Panc1 (cell line): ENCODE measurements at regions of chr17 and their contacts with region 1.

Region 1: GRCh38 chr17:60893475-60893874 is 215.8 kb downstream of the BCAS3 start:
- DNase-seq: no peak
- ATAC-seq: no peak
- H3K4me3 ChIP-seq: no peak overlapping the region
- H3K27ac ChIP-seq: no peak overlapping the region
- H3K4me1 ChIP-seq: no peaks in the 10 kb centered on the region
- H3K27me3 ChIP-seq: no peaks in the 10 kb centered on the region
- CTCF ChIP-seq: no peak

Region 2: DNA sequence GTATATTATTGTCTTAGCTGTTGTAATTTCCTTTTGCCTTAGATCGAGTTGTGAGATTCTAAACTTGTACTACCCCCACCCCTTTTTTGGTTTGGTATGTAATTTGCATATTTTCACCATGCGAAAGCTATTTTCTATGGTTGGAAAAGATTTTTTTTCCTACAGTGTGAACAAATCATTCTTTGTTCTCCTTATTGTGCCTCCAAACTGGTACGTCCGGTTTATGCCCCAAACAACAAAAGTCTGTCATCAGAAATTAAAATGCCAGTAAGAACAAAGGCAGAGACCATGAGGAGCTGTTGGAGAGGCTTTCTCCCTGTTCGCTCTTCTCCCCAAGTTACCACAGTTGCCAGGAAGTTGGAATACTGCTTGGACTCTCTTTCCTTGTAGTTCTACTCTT is 149.7 kb before region 1 on chr17:
- CTCF ChIA-PET with region 1: no interaction called
- POLR2A ChIA-PET with region 1: no interaction called
- in situ Hi-C with region 1: no loop called
- intact Hi-C with region 1: no loop called
- DNase-seq: no peak
- ATAC-seq: no peak
- H3K4me3 ChIP-seq: no peak overlapping the region
- H3K27ac ChIP-seq: no peak overlapping the region
- H3K4me1 ChIP-seq: no peaks in the 10 kb centered on the region
- H3K27me3 ChIP-seq: no peaks in the 10 kb centered on the region
- CTCF ChIP-seq: no peak

Region 3: GRCh38 chr17:60947100-60947499 is 53.6 kb after region 1 on chr17:
- CTCF ChIA-PET with region 1: no interaction called
- POLR2A ChIA-PET with region 1: interaction called, 13 read pairs
- in situ Hi-C with region 1: no loop called
- intact Hi-C with region 1: no loop called
- DNase-seq: no peak
- ATAC-seq: no peak
- H3K4me3 ChIP-seq: no peak overlapping the region
- H3K27ac ChIP-seq: no peak overlapping the region
- H3K4me1 ChIP-seq: no peaks in the 10 kb centered on the region
- H3K27me3 ChIP-seq: no peaks in the 10 kb centered on the region
- CTCF ChIP-seq: no peak